ENCODE measurements at regions of chr4 and their contacts with region 1.

Region 1: GRCh38 chr4:120829113-120829831 is 93.3 kb downstream of the PRDM5 start:
- DNase-seq: peak; percentile 31
- H3K4me3 ChIP-seq: no peak overlapping the region
- H3K27ac ChIP-seq: peak overlapping the region in 1 of 2 experiments; percentile 87; a peak in 2 of 4 replicates
- H3K4me1 ChIP-seq: peaks cover 0 to 18% of the 10 kb centered on the region in 2 experiments; a peak in 2 of 4 replicates
- H3K27me3 ChIP-seq: no peaks in the 10 kb centered on the region
- CTCF ChIP-seq: no peak
- EP300 ChIP-seq: peak in 1 of 2 experiments; percentile 91; a peak in 3 of 4 replicates
- RAD21 ChIP-seq: peak; percentile 33; the same call in 1 of the 2 replicates

Region 2: DNA sequence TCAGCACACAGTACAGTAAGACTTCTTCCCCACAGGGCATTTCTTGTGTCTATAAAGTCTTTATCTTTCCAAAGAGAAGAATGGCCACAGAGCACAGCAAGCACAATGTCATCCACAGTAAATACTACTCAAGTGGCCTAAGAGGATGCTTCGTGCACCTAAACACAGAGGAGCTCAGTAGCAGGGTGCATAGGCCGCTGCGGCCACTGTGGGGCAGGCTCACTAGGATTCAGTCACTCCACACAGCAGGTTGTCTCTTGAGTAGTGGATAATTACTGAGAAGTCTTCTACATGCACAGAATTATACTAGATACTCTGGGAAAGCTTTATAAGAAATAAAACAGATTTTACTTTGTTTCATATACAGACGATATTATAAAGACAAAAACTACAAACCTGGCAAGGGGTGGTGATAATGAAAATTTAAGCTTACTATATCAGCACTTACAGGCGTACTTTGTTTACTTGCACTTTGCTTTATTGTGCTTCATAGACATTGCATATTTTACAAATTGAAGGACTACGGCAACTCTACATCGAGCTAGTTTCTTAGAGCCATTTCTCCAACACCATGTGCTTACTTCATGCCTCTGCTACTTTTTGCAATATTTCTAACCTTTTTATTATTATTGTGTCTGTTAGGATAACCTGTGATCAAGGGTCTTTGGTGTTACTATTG is 14.7 kb after region 1 on chr4:
- CTCF ChIA-PET with region 1: interaction called, 19 read pairs
- POLR2A ChIA-PET with region 1: no interaction called
- DNase-seq: peak; percentile 42
- H3K4me3 ChIP-seq: no peak overlapping the region
- H3K27ac ChIP-seq: no peak overlapping the region
- H3K4me1 ChIP-seq: peaks cover 4 to 9% of the 10 kb centered on the region in 2 experiments; a peak in 2 of 4 replicates
- H3K27me3 ChIP-seq: no peaks in the 10 kb centered on the region
- CTCF ChIP-seq: peak; percentile 41
- EP300 ChIP-seq: no peak
- RAD21 ChIP-seq: peak; percentile 46

Region 3: GRCh38 chr4:120922381-120923206 is 93.3 kb after region 1 on chr4 and contains the start of gene PRDM5:
- CTCF ChIA-PET with region 1: interaction called, 15 read pairs
- POLR2A ChIA-PET with region 1: no interaction called
- DNase-seq: peak; percentile 88
- H3K4me3 ChIP-seq: peak within 1 kb of the TSS; percentile 75 to 83
- H3K27ac ChIP-seq: peak within 1 kb of the TSS; percentile 61 to 93
- H3K4me1 ChIP-seq: peaks cover 0 to 19% of the 10 kb centered on the region in 2 experiments; a peak in 2 of 4 replicates
- H3K27me3 ChIP-seq: no peaks in the 10 kb centered on the region
- CTCF ChIP-seq: peak; percentile 20; the same call in 1 of the 2 replicates
- EP300 ChIP-seq: no peak
- RAD21 ChIP-seq: no peak
- polyA plus RNA-seq, gene PRDM5: 3.8 and 5.4 TPM in 2 replicates

Region 4: DNA sequence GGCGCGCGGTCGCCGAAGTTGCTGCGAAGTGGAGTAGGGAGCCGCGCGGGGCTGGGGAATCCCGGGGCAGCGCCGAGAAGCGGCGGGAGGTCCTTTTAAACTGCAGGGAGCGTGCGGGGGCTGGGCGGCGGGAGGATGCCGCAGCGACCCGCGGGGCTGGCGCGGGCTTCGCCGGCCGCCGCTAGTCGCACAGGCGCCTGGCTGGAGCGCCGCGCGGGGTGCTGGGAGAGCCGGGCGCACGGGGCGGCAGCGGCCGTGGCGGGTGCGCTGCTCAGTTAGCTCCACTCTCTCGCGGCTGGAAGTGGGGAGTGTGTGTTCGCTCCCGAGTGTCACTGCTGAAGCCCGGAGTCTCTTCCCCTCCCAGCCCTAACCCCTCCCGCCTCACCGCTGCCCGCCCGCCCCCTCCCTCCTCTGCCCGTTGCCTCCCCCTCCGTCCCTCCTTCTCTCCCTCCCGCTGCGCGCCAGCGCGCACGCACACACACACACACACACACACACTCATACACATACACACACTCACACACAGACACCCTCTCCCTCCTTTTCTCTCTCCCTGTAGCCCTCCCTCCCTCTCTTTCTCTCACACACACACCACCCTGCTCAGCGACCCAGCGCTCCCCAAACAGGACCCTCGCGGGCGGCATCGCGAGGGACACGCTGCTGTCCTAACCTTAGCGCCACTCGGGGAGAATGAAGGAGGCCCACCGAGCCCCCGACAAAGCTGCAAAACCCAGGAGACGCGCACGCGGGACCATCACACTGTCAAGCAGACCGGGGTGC is 243.1 kb after region 1 on chr4 and contains the start of gene NDNF:
- CTCF ChIA-PET with region 1: no interaction called
- POLR2A ChIA-PET with region 1: no interaction called
- DNase-seq: peak; percentile 79
- H3K4me3 ChIP-seq: peak within 1 kb of the TSS; percentile 53 to 68
- H3K27ac ChIP-seq: no peak within 1 kb of the TSS
- H3K4me1 ChIP-seq: peaks cover 7 to 18% of the 10 kb centered on the region in 2 experiments; a peak in 3 of 4 replicates
- H3K27me3 ChIP-seq: peaks cover 34% of the 10 kb centered on the region
- CTCF ChIP-seq: no peak
- EP300 ChIP-seq: no peak
- RAD21 ChIP-seq: no peak
- polyA plus RNA-seq, gene NDNF: 0.13 TPM in 1 of 2 replicates, not detected in the other